Activated naive CD4-positive, alpha-beta T cell treated with anti-CD3 and anti-CD28 coated beads for 36 hours (primary cell): ENCODE measurements at regions of chr15 and their contacts with region 1.

Region 1: GRCh38 chr15:44426975-44427755 is at the start of gene CTDSPL2:
- DNase-seq: peak; percentile 97
- H3K4me3 Mint-ChIP-seq: peak within 1 kb of the TSS; percentile 98
- H3K27ac Mint-ChIP-seq: peak within 1 kb of the TSS; percentile 100
- H3K4me1 Mint-ChIP-seq: peaks cover 41% of the 10 kb centered on the region
- H3K27me3 Mint-ChIP-seq: no peaks in the 10 kb centered on the region
- total RNA-seq, gene CTDSPL2: 61.8 to 63.7 TPM

Region 2: GRCh38 chr15:43824302-43825246 is 602.6 kb before region 1 on chr15 and contains the start of gene MFAP1:
- CTCF ChIA-PET with region 1: no interaction called
- intact Hi-C with region 1: loop called (anchors 1 kb)
- DNase-seq: peak; percentile 96
- H3K4me3 Mint-ChIP-seq: peak within 1 kb of the TSS; percentile 98
- H3K27ac Mint-ChIP-seq: peak within 1 kb of the TSS; percentile 98
- H3K4me1 Mint-ChIP-seq: peaks cover 52% of the 10 kb centered on the region
- H3K27me3 Mint-ChIP-seq: no peaks in the 10 kb centered on the region
- total RNA-seq, gene MFAP1: 28.5 to 28.7 TPM

Region 3: GRCh38 chr15:44137750-44138149 is 289.4 kb before region 1 on chr15:
- CTCF ChIA-PET with region 1: no interaction called
- intact Hi-C with region 1: no loop called
- DNase-seq: no peak
- H3K4me3 Mint-ChIP-seq: no peak overlapping the region
- H3K27ac Mint-ChIP-seq: no peak overlapping the region
- H3K4me1 Mint-ChIP-seq: no peaks in the 10 kb centered on the region
- H3K27me3 Mint-ChIP-seq: no peaks in the 10 kb centered on the region

Region 4: DNA sequence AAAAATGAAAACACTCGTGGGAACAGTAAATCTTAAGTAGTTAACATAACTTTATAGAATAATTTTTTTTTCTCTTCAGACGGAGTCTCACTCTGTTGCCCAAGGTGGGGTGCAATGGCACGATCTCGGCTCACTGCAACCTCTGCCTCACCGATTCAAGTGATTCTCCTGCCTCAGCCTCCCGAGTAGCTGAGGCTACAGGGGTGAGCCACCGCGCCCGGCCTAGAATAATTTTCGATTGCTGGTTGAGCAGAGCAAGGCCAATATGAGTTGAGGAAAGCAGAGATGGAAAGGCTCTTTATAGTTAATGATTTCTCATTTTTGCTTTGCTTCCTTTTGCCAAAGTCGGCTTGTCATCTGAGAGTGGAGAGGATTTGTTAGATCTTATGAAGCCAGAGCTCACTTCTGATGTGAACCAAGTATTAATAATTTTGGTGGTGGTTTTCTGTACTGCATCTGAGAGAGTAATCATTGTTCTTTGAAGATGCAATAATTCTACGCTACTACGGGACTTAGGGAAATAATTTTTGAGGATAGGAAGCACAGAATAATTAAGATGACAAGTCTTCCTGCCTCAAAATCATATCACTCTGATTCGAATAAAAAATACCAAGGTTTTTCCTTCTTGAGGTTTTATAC is 140.2 kb before region 1 on chr15:
- CTCF ChIA-PET with region 1: interaction called, 4 read pairs
- intact Hi-C with region 1: loop called (anchors 1 kb)
- DNase-seq: no peak
- H3K4me3 Mint-ChIP-seq: peak overlapping the region; percentile 88
- H3K27ac Mint-ChIP-seq: peak overlapping the region; percentile 94
- H3K4me1 Mint-ChIP-seq: peaks cover 36% of the 10 kb centered on the region
- H3K27me3 Mint-ChIP-seq: no peaks in the 10 kb centered on the region

Region 5: DNA sequence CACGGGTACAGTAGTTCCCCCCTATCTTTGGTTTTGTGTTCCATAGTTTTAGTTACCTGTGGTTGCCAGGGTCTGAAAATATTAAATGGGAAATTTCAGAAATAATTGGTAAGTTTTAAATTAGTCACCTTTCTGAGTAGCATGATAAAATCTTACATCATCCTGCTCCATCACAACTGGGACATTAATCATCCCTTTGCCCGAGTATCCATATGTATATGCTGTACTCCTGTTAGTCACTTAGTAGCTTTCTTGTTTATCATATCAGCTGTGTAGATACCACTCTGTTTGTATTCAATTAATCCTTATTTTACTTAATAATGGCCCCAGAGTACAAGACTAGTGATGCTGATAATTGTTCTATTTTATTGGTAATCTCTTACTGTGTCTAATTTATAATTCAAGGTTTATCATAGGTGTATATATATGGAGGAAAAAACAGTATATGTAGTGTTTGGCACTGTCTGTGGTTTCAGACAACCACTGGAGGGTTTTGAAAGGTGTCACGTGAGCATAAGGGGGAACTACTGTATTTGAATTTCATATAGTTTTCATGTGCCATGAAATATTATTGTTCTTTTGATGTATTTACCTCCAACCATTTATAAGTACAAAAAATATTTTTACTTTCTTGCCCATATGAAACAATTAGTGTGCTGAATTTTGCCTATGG is 41.7 kb after region 1 on chr15:
- CTCF ChIA-PET with region 1: interaction called, 3 read pairs
- intact Hi-C with region 1: loop called (anchors 1 kb)
- DNase-seq: no peak
- H3K4me3 Mint-ChIP-seq: no peak overlapping the region
- H3K27ac Mint-ChIP-seq: peak overlapping the region; percentile 65
- H3K4me1 Mint-ChIP-seq: peaks cover 25% of the 10 kb centered on the region
- H3K27me3 Mint-ChIP-seq: no peaks in the 10 kb centered on the region

Region 6: DNA sequence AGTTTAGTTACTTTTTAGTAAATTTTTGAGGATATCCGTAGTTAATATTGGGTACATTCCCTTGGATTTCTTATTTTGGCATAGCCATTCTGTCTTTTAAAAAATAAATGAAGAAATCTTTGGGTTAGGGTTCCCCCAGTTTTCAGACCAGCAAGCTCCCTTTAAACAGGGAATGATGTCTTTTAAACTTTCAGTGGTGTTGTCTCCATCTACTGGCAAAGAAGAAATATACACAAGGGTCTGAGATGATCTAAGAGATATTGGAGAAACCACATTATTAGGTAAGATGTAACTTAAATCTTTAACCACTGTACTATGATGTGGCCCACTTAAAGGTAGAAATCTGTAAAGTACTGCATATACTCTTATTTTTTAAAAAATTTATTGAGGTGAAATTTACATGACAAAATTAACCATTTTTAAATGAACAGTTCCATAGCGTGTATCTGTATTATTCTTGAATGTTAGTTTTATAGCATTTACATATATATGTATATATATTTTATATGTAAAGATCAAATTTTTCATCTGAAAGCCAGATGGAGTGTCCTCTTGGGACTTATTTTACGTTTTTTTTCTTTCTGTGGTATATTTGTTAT is 74.7 kb after region 1 on chr15:
- CTCF ChIA-PET with region 1: interaction called, 15 read pairs
- intact Hi-C with region 1: loop called (anchors 1 kb)
- DNase-seq: no peak
- H3K4me3 Mint-ChIP-seq: no peak overlapping the region
- H3K27ac Mint-ChIP-seq: no peak overlapping the region
- H3K4me1 Mint-ChIP-seq: peaks cover 18% of the 10 kb centered on the region
- H3K27me3 Mint-ChIP-seq: no peaks in the 10 kb centered on the region

Region 7: DNA sequence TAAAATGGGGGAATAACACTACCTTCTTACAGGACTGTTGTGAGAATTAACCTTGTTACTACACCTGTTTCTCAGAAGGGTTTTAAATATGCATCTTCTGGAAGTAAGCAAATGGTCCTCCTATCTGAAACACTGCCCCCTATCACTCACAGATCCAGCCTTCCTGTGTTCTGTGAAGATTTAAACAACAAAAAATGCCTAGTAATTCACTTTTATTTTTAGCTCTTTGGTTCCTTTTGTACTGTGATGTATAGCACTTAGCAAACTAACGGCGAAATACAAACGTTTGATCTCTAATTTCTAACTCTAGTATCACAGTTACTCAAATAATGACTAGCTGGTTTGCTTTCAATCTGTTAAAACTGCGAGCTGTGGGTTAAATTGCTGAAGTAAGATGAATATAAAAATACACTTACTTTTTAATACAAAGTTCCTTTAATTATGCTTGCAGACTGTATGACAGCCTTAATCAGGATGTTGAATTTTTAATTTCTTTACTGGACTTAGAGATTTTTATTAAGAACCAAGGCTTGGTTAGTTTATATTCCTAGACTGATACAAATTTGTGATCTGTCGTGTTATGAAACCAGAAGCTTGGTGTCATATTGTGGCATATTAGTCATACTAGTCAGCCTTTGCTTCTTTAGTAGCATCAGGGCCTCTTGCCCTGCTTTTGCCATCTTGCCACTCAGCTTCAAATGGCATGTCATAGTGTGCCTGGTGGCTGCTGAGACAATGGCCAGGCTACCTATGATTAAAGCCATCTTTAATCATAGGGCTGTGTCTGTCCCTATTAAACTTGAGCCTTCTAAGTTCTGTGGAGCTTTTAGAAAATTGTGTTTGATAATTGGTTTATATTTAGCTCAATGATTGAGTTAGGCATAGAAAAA is 119.0 kb after region 1 on chr15:
- CTCF ChIA-PET with region 1: interaction called, 4 read pairs
- intact Hi-C with region 1: loop called (anchors 1 kb)
- DNase-seq: peak; percentile 74
- H3K4me3 Mint-ChIP-seq: peak overlapping the region; percentile 46
- H3K27ac Mint-ChIP-seq: peak overlapping the region; percentile 84
- H3K4me1 Mint-ChIP-seq: peaks cover 59% of the 10 kb centered on the region
- H3K27me3 Mint-ChIP-seq: no peaks in the 10 kb centered on the region

Region 8: GRCh38 chr15:45402162-45402954 is 975.2 kb after region 1 on chr15:
- CTCF ChIA-PET with region 1: no interaction called
- intact Hi-C with region 1: loop called (anchors 2 kb)
- DNase-seq: peak; percentile 98
- H3K4me3 Mint-ChIP-seq: peak overlapping the region; percentile 99
- H3K27ac Mint-ChIP-seq: peak overlapping the region; percentile 89
- H3K4me1 Mint-ChIP-seq: peaks cover 27% of the 10 kb centered on the region
- H3K27me3 Mint-ChIP-seq: no peaks in the 10 kb centered on the region